ENCODE measurements at regions of chr9 and their contacts with region 1.

Region 1: DNA sequence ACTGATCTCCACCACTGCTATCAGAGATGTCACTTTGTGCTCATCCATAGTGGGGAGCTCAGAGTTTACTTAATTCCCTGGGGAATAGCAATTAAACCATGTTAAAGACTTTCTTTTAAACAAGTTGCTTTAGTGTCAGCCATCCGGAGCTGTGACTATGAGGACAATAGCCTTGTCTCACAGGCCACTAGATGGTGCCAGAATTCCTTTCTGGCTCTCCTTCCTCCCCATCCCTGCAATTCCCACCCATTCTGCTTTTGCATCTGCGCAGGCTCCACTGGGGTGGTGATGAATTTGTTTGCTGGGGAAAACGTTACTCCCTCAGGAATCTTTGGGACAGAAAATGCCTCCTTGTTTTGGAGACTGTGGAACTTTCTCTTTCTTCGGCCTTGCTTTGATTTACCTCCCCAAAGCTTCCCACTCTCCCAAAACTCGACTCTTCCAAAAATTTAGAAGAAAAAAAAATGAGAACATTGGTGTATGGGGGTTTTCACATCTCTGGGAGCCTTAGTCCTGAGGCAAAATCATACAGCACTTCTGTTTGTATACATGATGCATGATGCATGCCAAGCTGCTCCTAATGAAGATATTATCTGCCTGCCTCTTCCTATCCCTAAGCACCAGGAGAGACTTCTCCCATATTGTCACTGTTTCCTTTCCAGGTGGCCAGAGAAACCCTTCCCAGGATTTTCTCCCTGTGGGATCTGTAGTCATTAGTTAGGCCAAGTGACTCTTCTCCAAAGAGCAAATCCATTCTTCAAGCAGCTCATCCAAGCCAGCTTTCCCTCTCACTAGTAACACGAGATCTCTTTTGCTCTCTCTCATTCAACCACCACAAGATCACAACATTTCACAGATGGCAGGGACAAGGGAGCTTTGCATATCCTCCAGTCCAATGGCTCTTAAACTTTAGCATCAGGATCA is 466.1 kb downstream of the TLR4 start:
- DNase-seq: peak; percentile 78
- H3K4me3 Mint-ChIP-seq: no peak overlapping the region
- H3K27ac Mint-ChIP-seq: no peak overlapping the region
- H3K4me1 Mint-ChIP-seq: no peaks in the 10 kb centered on the region
- H3K27me3 Mint-ChIP-seq: peaks cover 21% of the 10 kb centered on the region
- CTCF ChIP-seq: peak; percentile 73

Region 2: GRCh38 chr9:117644133-117644931 is 526.0 kb before region 1 on chr9:
- CTCF ChIA-PET with region 1: interaction called, 3 read pairs
- POLR2A ChIA-PET with region 1: no interaction called
- intact Hi-C with region 1: loop called (anchors 10 kb)
- DNase-seq: peak; percentile 75
- H3K4me3 Mint-ChIP-seq: peak overlapping the region; percentile 5
- H3K27ac Mint-ChIP-seq: no peak overlapping the region
- H3K4me1 Mint-ChIP-seq: peaks cover 6% of the 10 kb centered on the region
- H3K27me3 Mint-ChIP-seq: no peaks in the 10 kb centered on the region
- CTCF ChIP-seq: peak; percentile 94

Region 3: GRCh38 chr9:118183571-118183970 is 13.3 kb after region 1 on chr9:
- CTCF ChIA-PET with region 1: interaction called, 11 read pairs
- POLR2A ChIA-PET with region 1: no interaction called
- intact Hi-C with region 1: no loop called
- DNase-seq: no peak
- H3K4me3 Mint-ChIP-seq: no peak overlapping the region
- H3K27ac Mint-ChIP-seq: no peak overlapping the region
- H3K4me1 Mint-ChIP-seq: no peaks in the 10 kb centered on the region
- H3K27me3 Mint-ChIP-seq: no peaks in the 10 kb centered on the region
- CTCF ChIP-seq: no peak

Region 4: GRCh38 chr9:118209343-118209742 is 39.0 kb after region 1 on chr9:
- CTCF ChIA-PET with region 1: no interaction called
- POLR2A ChIA-PET with region 1: no interaction called
- intact Hi-C with region 1: no loop called
- DNase-seq: no peak
- H3K4me3 Mint-ChIP-seq: no peak overlapping the region
- H3K27ac Mint-ChIP-seq: no peak overlapping the region
- H3K4me1 Mint-ChIP-seq: no peaks in the 10 kb centered on the region
- H3K27me3 Mint-ChIP-seq: no peaks in the 10 kb centered on the region
- CTCF ChIP-seq: no peak

Region 5: GRCh38 chr9:118522093-118523028 is 352.1 kb after region 1 on chr9:
- CTCF ChIA-PET with region 1: interaction called, 5 read pairs
- POLR2A ChIA-PET with region 1: no interaction called
- intact Hi-C with region 1: loop called (anchors 1 kb)
- DNase-seq: peak; percentile 73
- H3K4me3 Mint-ChIP-seq: no peak overlapping the region
- H3K27ac Mint-ChIP-seq: no peak overlapping the region
- H3K4me1 Mint-ChIP-seq: no peaks in the 10 kb centered on the region
- H3K27me3 Mint-ChIP-seq: no peaks in the 10 kb centered on the region
- CTCF ChIP-seq: peak; percentile 77

Region 6: GRCh38 chr9:118711843-118712242 is 541.5 kb after region 1 on chr9:
- CTCF ChIA-PET with region 1: no interaction called
- POLR2A ChIA-PET with region 1: no interaction called
- intact Hi-C with region 1: no loop called
- DNase-seq: no peak
- H3K4me3 Mint-ChIP-seq: no peak overlapping the region
- H3K27ac Mint-ChIP-seq: no peak overlapping the region
- H3K4me1 Mint-ChIP-seq: no peaks in the 10 kb centered on the region
- H3K27me3 Mint-ChIP-seq: no peaks in the 10 kb centered on the region
- CTCF ChIP-seq: no peak

Region 7: GRCh38 chr9:119365291-119366027 is 1195.2 kb after region 1 on chr9:
- CTCF ChIA-PET with region 1: interaction called, 17 read pairs
- POLR2A ChIA-PET with region 1: no interaction called
- intact Hi-C with region 1: no loop called
- DNase-seq: peak; percentile 53
- H3K4me3 Mint-ChIP-seq: no peak overlapping the region
- H3K27ac Mint-ChIP-seq: no peak overlapping the region
- H3K4me1 Mint-ChIP-seq: no peaks in the 10 kb centered on the region
- H3K27me3 Mint-ChIP-seq: peaks cover 16% of the 10 kb centered on the region
- CTCF ChIP-seq: peak; percentile 57